ENCODE measurements at regions of chr5 and their contacts with region 1.

Region 1: DNA sequence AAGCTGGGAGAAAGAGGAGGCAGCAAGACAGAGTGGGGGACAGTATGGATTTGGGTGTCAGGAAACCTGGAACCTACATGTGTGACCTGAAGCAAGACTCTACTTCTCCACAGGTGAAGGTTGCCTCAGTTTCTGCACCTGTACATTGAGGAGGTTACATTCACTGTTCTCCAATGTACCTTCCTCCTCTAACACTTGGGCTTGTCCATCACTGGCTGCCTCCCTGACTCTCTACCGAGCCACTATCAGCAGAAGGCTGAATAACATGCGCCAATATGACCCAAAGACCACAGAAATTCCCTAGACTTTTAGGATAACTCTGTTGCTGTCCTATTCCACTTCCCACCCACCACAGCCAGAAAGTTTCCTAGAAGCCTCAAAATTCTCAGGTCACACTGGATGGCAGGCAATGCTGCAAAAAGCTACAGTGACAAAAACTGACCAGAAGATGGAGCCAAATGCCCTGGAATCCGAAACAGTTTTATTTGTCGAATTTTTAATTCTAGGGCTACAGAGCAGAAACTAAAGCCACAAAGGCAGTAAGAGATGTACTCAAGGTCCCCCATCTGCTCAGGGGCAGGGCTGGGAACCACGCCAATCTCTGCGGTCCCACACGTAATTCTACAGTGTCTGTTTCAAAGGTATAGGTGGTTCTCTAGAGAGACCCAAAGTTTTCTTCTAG is 64.4 kb downstream of the FAM114A2 start:
- DNase-seq: no peak
- H3K4me3 ChIP-seq: no peak overlapping the region
- H3K27ac ChIP-seq: no peak overlapping the region
- H3K4me1 ChIP-seq: no peaks in the 10 kb centered on the region
- H3K27me3 ChIP-seq: no peaks in the 10 kb centered on the region
- CTCF ChIP-seq: peak in 3 of 4 experiments; percentile 43 to 58 (median 50)
- POLR2A ChIP-seq: no peak

Region 2: GRCh38 chr5:154189819-154190594 is 215.7 kb after region 1 on chr5:
- intact Hi-C with region 1: loop called (anchors 10 kb)
- DNase-seq: peak; percentile 68
- H3K4me3 ChIP-seq: peak overlapping the region; percentile 80 to 83
- H3K27ac ChIP-seq: peak overlapping the region; percentile 62 to 64
- H3K4me1 ChIP-seq: no peaks in the 10 kb centered on the region
- H3K27me3 ChIP-seq: no peaks in the 10 kb centered on the region
- CTCF ChIP-seq: peak in 1 of 4 experiments; percentile 23
- POLR2A ChIP-seq: peak; percentile 15

Region 3: DNA sequence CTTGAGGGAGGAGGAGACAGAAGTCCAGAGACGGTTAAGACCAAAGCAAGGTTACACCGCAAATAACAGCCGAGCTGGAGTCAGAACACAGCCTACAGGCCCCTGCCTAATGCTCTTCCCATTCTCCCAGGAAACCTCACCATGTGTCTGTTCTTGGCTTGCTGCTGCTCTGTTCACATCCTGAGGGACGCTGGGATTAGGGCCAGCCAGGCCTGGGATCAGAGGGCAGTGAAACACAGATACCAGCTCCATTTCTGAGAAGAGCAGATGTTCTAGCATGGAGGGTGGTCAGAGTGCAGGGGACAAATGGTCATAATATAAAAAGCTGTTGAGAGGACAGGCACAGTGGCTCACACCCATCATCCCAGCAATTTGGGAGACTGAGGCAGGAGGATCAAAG is 656.1 kb after region 1 on chr5:
- intact Hi-C with region 1: loop called (anchors 10 kb)
- DNase-seq: no peak
- H3K4me3 ChIP-seq: no peak overlapping the region
- H3K27ac ChIP-seq: no peak overlapping the region
- H3K4me1 ChIP-seq: no peaks in the 10 kb centered on the region
- H3K27me3 ChIP-seq: no peaks in the 10 kb centered on the region
- CTCF ChIP-seq: no peak
- POLR2A ChIP-seq: no peak